ENCODE measurements at regions of chr22 and their contacts with region 1.

Region 1: GRCh38 chr22:36470162-36470993 is 11.1 kb downstream of the TXN2 start:
- DNase-seq: peak; percentile 82 to 95 (median 90)
- H3K4me3 ChIP-seq: no peak overlapping the region
- H3K27ac ChIP-seq: peak overlapping the region in 4 of 5 donors; percentile 59 to 87 (median 76)
- H3K4me1 ChIP-seq: peaks cover 32 to 47% of the 10 kb centered on the region in 2 donors
- H3K27me3 ChIP-seq: no peaks in the 10 kb centered on the region
- CTCF ChIP-seq: peak; percentile 89 to 96 (median 90)
- POLR2A ChIP-seq: no peak

Region 2: DNA sequence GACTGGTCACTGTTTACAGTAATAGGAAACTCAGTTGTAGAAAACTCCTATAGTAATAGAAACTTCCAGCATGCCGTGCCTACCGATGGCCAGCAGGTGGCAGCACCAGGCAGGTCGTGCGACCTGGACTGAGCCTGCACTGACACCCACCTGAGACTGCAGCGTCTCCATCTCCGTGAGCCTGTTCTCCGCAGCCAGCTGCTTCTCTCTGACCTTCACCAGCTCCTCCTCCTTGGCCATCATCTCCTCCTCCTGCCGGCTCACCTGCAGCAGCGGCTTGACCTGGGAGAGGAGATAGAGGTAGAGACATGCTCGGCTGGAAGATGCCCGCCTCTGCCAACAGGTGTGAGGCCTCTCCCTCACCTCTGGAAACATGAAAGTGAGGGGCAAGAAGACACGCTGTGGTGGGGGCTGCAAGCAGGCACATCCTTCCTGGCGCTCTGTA is 169.0 kb before region 1 on chr22:
- intact Hi-C with region 1: loop called (anchors 2 to 5 kb)
- DNase-seq: peak; percentile 66 to 91 (median 80)
- H3K4me3 ChIP-seq: no peak overlapping the region
- H3K27ac ChIP-seq: no peak overlapping the region
- H3K4me1 ChIP-seq: no peaks in the 10 kb centered on the region
- H3K27me3 ChIP-seq: no peaks in the 10 kb centered on the region
- CTCF ChIP-seq: peak; percentile 88 to 96 (median 93)
- POLR2A ChIP-seq: no peak

Measured in adrenal gland (tissue), 19 donors.